H1 (cell line): ENCODE measurements at regions of chr6 and their contacts with region 1.

Region 1: GRCh38 chr6:73610444-73611275 is 43.1 kb downstream of the SLC17A5 start:
- DNase-seq: no peak
- H3K4me3 ChIP-seq: no peak overlapping the region
- H3K27ac ChIP-seq: no peak overlapping the region
- H3K4me1 ChIP-seq: no peaks in the 10 kb centered on the region
- H3K27me3 ChIP-seq: no peaks in the 10 kb centered on the region
- CTCF ChIP-seq: peak in 2 of 3 experiments; percentile 1 to 35; a peak in 2 of 4 replicates
- EP300 ChIP-seq: no peak
- POLR2A ChIP-seq: no peak
- RAD21 ChIP-seq: peak; percentile 55 to 60

Region 2: GRCh38 chr6:73542882-73543281 is 67.8 kb before region 1 on chr6:
- CTCF ChIA-PET with region 1: interaction called, 11 read pairs
- POLR2A ChIA-PET with region 1: no interaction called
- DNase-seq: no peak
- H3K4me3 ChIP-seq: no peak overlapping the region
- H3K27ac ChIP-seq: no peak overlapping the region
- H3K4me1 ChIP-seq: no peaks in the 10 kb centered on the region
- H3K27me3 ChIP-seq: no peaks in the 10 kb centered on the region
- CTCF ChIP-seq: no peak
- EP300 ChIP-seq: no peak
- POLR2A ChIP-seq: no peak
- RAD21 ChIP-seq: no peak

Region 3: DNA sequence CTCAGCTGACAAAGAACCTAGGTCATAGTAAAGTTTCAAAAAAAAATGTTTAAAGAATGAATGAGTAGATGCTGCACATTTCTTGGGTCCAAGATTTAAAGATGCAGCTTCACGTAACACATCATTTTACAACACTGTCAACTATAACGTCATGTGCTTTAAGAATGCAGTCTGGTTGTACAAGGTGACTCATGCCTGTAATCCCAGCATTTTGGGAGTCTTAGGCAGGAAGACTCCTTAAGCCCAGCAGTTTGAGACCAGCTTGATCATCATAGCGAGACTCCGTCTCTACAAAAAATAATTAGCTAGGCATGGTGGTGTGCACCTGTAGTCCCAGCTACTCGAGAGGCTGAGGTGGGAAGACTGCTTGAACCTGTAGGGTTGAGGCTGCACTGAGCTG is 21.2 kb after region 1 on chr6:
- CTCF ChIA-PET with region 1: interaction called, 23 read pairs
- POLR2A ChIA-PET with region 1: interaction called, 3 read pairs
- DNase-seq: no peak
- H3K4me3 ChIP-seq: no peak overlapping the region
- H3K27ac ChIP-seq: no peak overlapping the region
- H3K4me1 ChIP-seq: no peaks in the 10 kb centered on the region
- H3K27me3 ChIP-seq: no peaks in the 10 kb centered on the region
- CTCF ChIP-seq: no peak
- EP300 ChIP-seq: no peak
- POLR2A ChIP-seq: no peak
- RAD21 ChIP-seq: no peak